ENCODE measurements at regions of chr16 and their contacts with region 1.

Region 1: DNA sequence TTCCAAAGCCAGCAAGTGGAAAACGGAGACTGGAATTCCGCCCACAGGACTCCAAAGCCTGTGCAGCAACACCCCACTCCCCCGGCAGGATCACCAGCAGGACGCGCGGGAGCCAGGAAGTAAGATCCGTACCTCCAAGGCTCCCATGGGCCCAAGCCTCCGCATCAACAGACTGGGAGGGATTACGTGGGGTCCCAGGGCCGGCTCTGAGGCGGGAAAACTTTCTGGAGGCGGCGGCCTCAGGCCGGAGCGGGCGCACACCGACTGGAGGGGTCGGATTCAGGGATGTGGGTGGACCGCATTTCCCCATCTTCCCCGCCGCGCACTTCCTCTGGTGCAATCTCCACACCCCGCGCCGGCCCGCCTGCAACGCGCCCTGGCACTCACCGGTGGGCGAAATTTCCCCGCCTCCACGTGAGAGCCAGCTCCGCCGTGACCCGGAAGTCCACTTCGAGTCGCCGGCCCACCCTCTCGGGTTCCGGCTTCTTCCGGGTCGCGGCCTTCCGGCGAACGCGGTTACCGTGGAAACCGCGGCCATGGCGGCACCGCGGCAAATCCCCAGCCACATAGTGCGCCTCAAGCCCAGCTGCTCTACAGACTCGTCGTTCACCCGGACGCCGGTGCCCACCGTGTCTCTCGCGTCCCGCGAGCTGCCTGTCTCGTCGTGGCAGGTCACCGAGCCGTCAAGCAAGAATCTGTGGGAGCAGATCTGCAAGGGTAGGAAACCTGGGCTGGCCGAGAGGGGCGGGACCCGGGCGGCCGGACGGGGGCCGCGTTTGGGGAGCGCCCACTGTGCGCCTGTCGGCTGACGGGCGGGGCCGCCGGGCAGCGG is at the starts of genes IQCK and KNOP1:
- DNase-seq: peak; percentile 96
- H3K4me3 ChIP-seq: peak within 1 kb of the TSS; percentile 80 to 98 (median 88)
- H3K27ac ChIP-seq: peak within 1 kb of the TSS; percentile 70 to 88 (median 81)
- H3K4me1 ChIP-seq: peaks cover 0 to 23% (median 21%) of the 10 kb centered on the region in 4 donors
- H3K27me3 ChIP-seq: no peaks in the 10 kb centered on the region
- CTCF ChIP-seq: peak in 1 of 4 experiments; percentile 21
- EP300 ChIP-seq: peak in 1 of 4 donors; percentile 5
- POLR2A ChIP-seq: no peak
- total RNA-seq, gene IQCK: 10.3 to 16.6 (median 12.4) TPM
- total RNA-seq, gene KNOP1: 5.0 to 11.1 (median 7.6) TPM

Region 2: DNA sequence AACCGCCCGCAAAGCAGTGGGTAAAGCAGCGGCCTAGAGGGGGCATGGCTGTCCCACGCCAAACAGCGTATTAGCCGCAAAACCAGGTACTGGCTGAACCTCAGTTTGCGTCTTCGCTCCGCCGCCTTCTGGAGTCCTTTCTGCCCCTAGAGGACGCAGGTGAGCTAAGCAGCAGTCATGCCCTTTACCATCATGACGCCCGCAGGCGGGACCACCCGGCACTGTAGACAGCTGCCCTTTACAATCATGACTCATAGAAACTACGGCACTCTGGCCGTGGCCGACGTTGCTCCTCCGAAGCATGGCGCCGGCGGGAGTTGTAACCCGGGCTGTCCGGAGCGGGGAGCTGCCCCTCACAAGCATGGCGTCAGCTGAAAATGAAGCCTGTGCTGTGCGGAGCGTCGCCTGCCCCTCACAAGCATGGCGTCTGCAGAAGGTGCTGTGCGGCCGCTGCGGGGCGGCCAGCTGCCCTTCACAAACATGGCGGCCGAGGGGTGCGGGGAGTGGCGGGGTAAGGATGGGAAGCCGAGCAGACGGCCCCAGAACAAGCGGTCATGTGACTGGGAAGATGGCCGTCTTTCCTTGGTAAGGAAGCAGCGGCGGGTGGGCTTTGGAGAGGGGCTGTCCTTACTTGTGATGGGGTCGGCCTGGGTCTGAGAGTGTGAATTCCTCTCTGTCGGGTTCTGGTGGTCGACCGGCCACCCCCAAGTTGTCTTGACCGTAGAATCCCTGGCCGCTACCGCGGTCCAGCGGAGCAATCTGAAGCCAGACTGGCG is 162.6 kb before region 1 on chr16 and contains the start of gene VPS35L:
- intact Hi-C with region 1: loop called (anchors 10 kb)
- DNase-seq: peak; percentile 98
- H3K4me3 ChIP-seq: peak within 1 kb of the TSS; percentile 69 to 88 (median 76)
- H3K27ac ChIP-seq: peak within 1 kb of the TSS; percentile 86 to 90 (median 88)
- H3K4me1 ChIP-seq: peaks cover 0 to 18% (median 17%) of the 10 kb centered on the region in 4 donors
- H3K27me3 ChIP-seq: no peaks in the 10 kb centered on the region
- CTCF ChIP-seq: peak; percentile 64 to 72 (median 68)
- EP300 ChIP-seq: peak in 1 of 4 donors; percentile 4
- POLR2A ChIP-seq: peak in 1 of 2 donors; percentile 22
- total RNA-seq, gene VPS35L: 34.6 to 53.7 (median 47.8) TPM

Region 3: GRCh38 chr16:19601083-19601976 is 116.7 kb before region 1 on chr16:
- intact Hi-C with region 1: loop called (anchors 5 kb)
- DNase-seq: no peak
- H3K4me3 ChIP-seq: no peak overlapping the region
- H3K27ac ChIP-seq: no peak overlapping the region
- H3K4me1 ChIP-seq: peaks cover 0 to 11% (median 1%) of the 10 kb centered on the region in 4 donors
- H3K27me3 ChIP-seq: no peaks in the 10 kb centered on the region
- CTCF ChIP-seq: peak in 3 of 4 experiments; percentile 28 to 47 (median 32)
- EP300 ChIP-seq: no peak
- POLR2A ChIP-seq: no peak

Measured in sigmoid colon (tissue), 7 donors.